Endothelial cell of umbilical vein (primary cell): ENCODE measurements at regions of chr3 and their contacts with region 1.

Region 1: DNA sequence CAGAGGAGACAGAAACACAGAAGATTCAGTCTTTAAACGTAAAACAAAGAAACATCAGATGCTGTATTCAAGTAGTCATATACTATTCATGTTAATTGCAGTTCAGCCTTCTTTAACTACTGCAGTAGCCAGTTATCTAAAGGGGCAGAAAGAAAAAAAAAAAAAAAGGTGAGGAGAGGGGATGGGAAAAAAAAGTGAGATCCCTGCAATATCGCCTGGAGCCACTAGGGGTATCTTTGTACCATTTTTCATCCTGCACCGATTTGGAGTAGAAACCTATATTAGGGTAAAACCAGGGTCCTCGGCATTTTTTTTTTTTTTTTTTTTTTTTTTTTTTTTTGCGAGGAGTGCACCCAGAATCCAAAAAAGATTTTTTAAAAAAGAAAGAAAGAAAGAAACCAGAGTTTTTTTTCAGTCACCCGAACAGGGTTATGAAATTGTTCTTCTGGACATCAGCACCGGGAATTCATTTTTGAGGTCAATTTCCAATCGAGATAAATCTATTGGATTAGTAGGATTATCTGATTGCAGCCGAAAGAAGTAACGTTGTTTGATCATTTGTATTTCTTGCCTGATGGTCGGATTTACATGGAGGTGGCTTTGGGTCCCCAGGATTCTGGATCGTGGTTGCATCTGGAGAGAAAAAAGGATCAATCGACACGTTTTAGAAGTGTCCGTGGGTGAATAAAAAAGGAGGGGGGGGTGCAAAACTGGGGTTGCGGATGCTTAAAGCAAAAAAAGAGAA is 186.7 kb downstream of the NLGN1 start:
- DNase-seq: peak; percentile 84
- H3K4me3 ChIP-seq: peak overlapping the region; percentile 62 to 99 (median 99)
- H3K27ac ChIP-seq: peak overlapping the region; percentile 64
- H3K4me1 ChIP-seq: peaks cover 5% of the 10 kb centered on the region
- H3K27me3 ChIP-seq: no peaks in the 10 kb centered on the region
- CTCF ChIP-seq: peak; percentile 54 to 72
- POLR2A ChIP-seq: no peak

Region 2: DNA sequence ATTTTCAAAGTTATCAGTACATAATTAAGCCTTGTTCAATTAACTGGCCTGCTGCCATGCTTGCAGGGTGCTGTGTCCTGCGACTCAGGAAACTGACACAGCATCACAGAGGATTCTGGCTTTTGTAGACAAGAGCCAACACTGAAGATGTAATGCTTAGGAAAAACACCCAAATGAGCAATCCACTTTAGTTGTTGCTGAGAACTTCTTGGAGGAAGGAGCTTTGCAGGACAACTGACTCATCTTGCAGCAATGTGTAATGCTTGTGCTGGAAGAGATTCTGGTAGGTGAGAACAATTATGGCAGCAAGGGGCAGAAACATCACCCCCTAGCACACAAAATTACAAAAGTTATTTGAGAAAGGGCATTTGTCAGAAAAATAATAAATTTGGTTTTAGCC is 119.2 kb before region 1 on chr3:
- CTCF ChIA-PET with region 1: no interaction called
- POLR2A ChIA-PET with region 1: no interaction called
- dilution Hi-C with region 1: no loop called
- intact Hi-C with region 1: no loop called
- DNase-seq: peak; percentile 79
- H3K4me3 ChIP-seq: peak overlapping the region in 1 of 3 experiments; percentile 32
- H3K27ac ChIP-seq: peak overlapping the region; percentile 56
- H3K4me1 ChIP-seq: peaks cover 27% of the 10 kb centered on the region
- H3K27me3 ChIP-seq: no peaks in the 10 kb centered on the region
- CTCF ChIP-seq: no peak
- POLR2A ChIP-seq: no peak

Region 3: GRCh38 chr3:173676094-173676493 is 91.8 kb after region 1 on chr3:
- CTCF ChIA-PET with region 1: no interaction called
- POLR2A ChIA-PET with region 1: no interaction called
- dilution Hi-C with region 1: no loop called
- intact Hi-C with region 1: no loop called
- DNase-seq: no peak
- H3K4me3 ChIP-seq: no peak overlapping the region
- H3K27ac ChIP-seq: no peak overlapping the region
- H3K4me1 ChIP-seq: no peaks in the 10 kb centered on the region
- H3K27me3 ChIP-seq: no peaks in the 10 kb centered on the region
- CTCF ChIP-seq: no peak
- POLR2A ChIP-seq: no peak

Region 4: GRCh38 chr3:173733029-173733652 is 148.9 kb after region 1 on chr3:
- CTCF ChIA-PET with region 1: interaction called, 6 read pairs
- POLR2A ChIA-PET with region 1: no interaction called
- dilution Hi-C with region 1: no loop called
- intact Hi-C with region 1: loop called (anchors 1 kb)
- DNase-seq: peak; percentile 72
- H3K4me3 ChIP-seq: no peak overlapping the region
- H3K27ac ChIP-seq: no peak overlapping the region
- H3K4me1 ChIP-seq: peaks cover 20% of the 10 kb centered on the region
- H3K27me3 ChIP-seq: no peaks in the 10 kb centered on the region
- CTCF ChIP-seq: peak; percentile 23 to 44
- POLR2A ChIP-seq: no peak

Region 5: GRCh38 chr3:174002543-174002942 is 418.3 kb after region 1 on chr3:
- CTCF ChIA-PET with region 1: interaction called, 5 read pairs
- POLR2A ChIA-PET with region 1: no interaction called
- dilution Hi-C with region 1: no loop called
- intact Hi-C with region 1: loop called (anchors 1 kb)
- DNase-seq: peak; percentile 26
- H3K4me3 ChIP-seq: no peak overlapping the region
- H3K27ac ChIP-seq: no peak overlapping the region
- H3K4me1 ChIP-seq: no peaks in the 10 kb centered on the region
- H3K27me3 ChIP-seq: no peaks in the 10 kb centered on the region
- CTCF ChIP-seq: peak; percentile 11 to 29
- POLR2A ChIP-seq: no peak

Region 6: DNA sequence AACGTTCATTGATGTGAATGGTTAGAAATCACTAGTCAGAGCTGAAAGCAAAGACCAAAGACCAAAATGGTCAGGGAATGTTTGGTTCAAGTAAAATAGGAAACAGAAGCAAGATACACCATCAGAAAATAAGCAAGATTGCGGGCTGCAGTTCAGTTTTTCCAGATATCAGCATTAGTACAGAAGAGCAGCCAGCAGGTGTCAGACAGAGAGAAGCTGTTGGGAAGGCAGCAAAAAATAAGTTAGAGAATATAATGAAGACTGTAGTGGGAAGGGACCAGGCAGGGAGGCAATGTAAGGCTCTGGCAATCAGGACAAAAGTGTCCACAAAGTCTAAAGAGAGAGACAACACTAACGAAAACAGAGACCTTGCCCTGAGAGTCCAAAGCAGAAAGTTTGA is 635.5 kb after region 1 on chr3:
- CTCF ChIA-PET with region 1: no interaction called
- POLR2A ChIA-PET with region 1: no interaction called
- dilution Hi-C with region 1: no loop called
- intact Hi-C with region 1: no loop called
- DNase-seq: no peak
- H3K4me3 ChIP-seq: no peak overlapping the region
- H3K27ac ChIP-seq: no peak overlapping the region
- H3K4me1 ChIP-seq: no peaks in the 10 kb centered on the region
- H3K27me3 ChIP-seq: no peaks in the 10 kb centered on the region
- CTCF ChIP-seq: no peak
- POLR2A ChIP-seq: no peak

Region 7: GRCh38 chr3:174397848-174398247 is 813.6 kb after region 1 on chr3:
- CTCF ChIA-PET with region 1: no interaction called
- POLR2A ChIA-PET with region 1: no interaction called
- dilution Hi-C with region 1: no loop called
- intact Hi-C with region 1: loop called (anchors 10 kb)
- DNase-seq: peak; percentile 44
- H3K4me3 ChIP-seq: no peak overlapping the region
- H3K27ac ChIP-seq: no peak overlapping the region
- H3K4me1 ChIP-seq: no peaks in the 10 kb centered on the region
- H3K27me3 ChIP-seq: no peaks in the 10 kb centered on the region
- CTCF ChIP-seq: no peak
- POLR2A ChIP-seq: no peak

Region 8: DNA sequence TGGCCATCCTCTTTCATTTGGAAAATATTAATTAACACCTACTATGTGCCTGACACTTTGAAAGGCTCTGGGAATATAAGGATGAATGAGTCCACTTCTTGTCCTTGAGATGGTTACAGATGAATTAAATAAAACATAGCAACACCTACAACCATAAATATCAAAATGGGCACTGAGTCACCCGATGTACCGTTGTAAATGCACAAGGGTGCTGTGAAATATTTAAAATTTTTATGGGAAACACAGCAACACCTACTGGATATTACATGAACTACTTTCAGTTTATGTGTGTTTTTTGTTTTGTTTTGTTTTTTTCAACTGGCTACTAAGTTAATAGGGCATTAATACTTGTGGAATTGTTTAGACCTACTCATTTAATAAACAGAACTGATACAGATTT is 1035.9 kb after region 1 on chr3:
- CTCF ChIA-PET with region 1: no interaction called
- POLR2A ChIA-PET with region 1: no interaction called
- dilution Hi-C with region 1: no loop called
- intact Hi-C with region 1: loop called (anchors 10 kb)
- DNase-seq: peak; percentile 6
- H3K4me3 ChIP-seq: no peak overlapping the region
- H3K27ac ChIP-seq: no peak overlapping the region
- H3K4me1 ChIP-seq: no peaks in the 10 kb centered on the region
- H3K27me3 ChIP-seq: no peaks in the 10 kb centered on the region
- CTCF ChIP-seq: peak in 1 of 2 donors; percentile 5
- POLR2A ChIP-seq: no peak